ENCODE measurements at regions of chr6 and their contacts with region 1.

Region 1: DNA sequence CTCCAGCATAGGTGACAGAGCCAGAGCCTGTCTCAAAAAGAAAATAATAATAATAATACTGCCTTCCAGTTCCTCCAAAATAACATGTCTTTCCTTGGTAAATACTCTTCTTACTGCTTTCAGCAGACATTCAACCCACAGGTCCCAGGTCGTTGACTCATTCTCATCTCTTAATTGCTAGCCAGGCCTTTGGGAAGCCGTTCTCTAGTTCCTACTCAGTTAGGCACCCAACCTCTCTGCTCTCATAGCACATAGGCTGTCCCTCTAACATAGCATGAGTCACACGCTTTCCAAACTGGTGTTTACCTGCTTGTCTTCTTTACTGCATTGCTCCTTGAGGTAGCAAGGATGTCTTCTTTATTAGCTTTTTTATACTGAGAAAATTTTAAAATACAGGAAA is 98.8 kb downstream of the LAMA2 start:
- DNase-seq: no peak
- H3K4me3 ChIP-seq: no peak overlapping the region
- H3K27me3 ChIP-seq: no peaks in the 10 kb centered on the region
- CTCF ChIP-seq: no peak

Region 2: DNA sequence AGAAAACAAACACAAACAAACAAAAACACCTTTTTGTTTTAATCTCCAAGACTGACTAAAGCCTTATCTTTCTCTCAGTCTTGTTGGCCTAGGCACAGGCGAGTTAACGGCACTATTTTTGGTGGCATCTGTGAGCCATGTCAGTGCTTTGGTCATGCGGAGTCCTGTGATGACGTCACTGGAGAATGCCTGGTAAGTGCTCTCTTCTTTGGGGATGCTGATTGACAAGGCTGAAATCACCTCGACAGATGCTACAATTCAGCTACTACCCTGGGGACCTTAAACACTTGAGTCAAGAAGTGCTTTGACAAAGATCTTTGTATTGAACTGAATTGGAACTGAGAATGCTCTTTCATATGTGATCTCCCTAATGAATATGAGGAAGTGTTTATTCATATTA is 285.3 kb after region 1 on chr6:
- CTCF ChIA-PET with region 1: no interaction called
- POLR2A ChIA-PET with region 1: interaction called, 15 read pairs
- DNase-seq: no peak
- H3K4me3 ChIP-seq: no peak overlapping the region
- H3K27me3 ChIP-seq: no peaks in the 10 kb centered on the region
- CTCF ChIP-seq: no peak